Activated B cell treated with CpG ODN at 0.5 μM for 24 hours (primary cell): ENCODE measurements at regions of chr16 and their contacts with region 1.

Region 1: GRCh38 chr16:23803591-23804123 is 32.1 kb upstream of the PRKCB start:
- DNase-seq: peak; percentile 48
- ATAC-seq: peak; percentile 82
- H3K4me3 Mint-ChIP-seq: peak overlapping the region; percentile 51
- H3K27ac Mint-ChIP-seq: peak overlapping the region; percentile 26
- H3K4me1 Mint-ChIP-seq: peaks cover 47% of the 10 kb centered on the region
- H3K27me3 Mint-ChIP-seq: no peaks in the 10 kb centered on the region
- CTCF ChIP-seq: no peak

Region 2: DNA sequence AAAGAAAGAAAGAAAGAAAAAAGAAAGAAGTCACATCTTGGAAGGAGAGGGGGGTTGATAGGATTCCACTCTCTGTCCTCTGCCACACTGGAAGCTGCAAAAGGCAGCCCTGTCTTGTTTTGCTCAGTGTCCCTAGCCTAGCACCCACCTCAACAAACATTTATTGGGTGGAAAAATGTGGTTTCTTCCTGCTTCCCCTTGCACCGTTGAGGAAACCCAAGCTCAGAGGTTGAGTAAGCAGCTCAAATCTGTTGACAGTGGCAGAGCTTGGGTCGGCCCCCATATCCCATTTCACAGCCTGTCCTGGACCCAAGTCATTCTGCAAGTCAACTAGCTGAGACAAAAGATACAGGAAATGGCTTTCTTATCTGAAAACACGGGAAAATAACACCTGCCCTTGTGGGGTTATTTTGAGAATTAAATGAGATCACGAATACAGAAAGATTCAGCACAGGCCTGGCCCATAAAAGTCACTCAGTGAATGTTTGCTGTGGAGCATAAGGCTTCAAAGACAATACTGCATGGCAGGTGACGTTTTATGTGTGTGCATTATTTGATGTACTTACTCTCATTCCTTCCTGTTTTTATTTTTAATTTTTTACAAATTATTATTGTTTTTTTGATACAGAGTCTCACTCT is 437.9 kb before region 1 on chr16:
- CTCF ChIA-PET with region 1: no interaction called
- POLR2A ChIA-PET with region 1: no interaction called
- intact Hi-C with region 1: no loop called
- DNase-seq: no peak
- ATAC-seq: no peak
- H3K4me3 Mint-ChIP-seq: no peak overlapping the region
- H3K27ac Mint-ChIP-seq: no peak overlapping the region
- H3K4me1 Mint-ChIP-seq: peaks cover 4% of the 10 kb centered on the region
- H3K27me3 Mint-ChIP-seq: no peaks in the 10 kb centered on the region
- CTCF ChIP-seq: no peak

Region 3: GRCh38 chr16:23826528-23827045 is 22.9 kb after region 1 on chr16:
- CTCF ChIA-PET with region 1: interaction called, 14 read pairs
- POLR2A ChIA-PET with region 1: interaction called, 6 read pairs
- intact Hi-C with region 1: loop called (anchors 1 kb)
- DNase-seq: no peak
- ATAC-seq: peak; percentile 89
- H3K4me3 Mint-ChIP-seq: peak overlapping the region; percentile 28
- H3K27ac Mint-ChIP-seq: peak overlapping the region; percentile 83
- H3K4me1 Mint-ChIP-seq: peaks cover 30% of the 10 kb centered on the region
- H3K27me3 Mint-ChIP-seq: no peaks in the 10 kb centered on the region
- CTCF ChIP-seq: no peak

Region 4: GRCh38 chr16:23858542-23858941 is 54.9 kb after region 1 on chr16:
- CTCF ChIA-PET with region 1: interaction called, 28 read pairs
- POLR2A ChIA-PET with region 1: interaction called, 6 read pairs
- intact Hi-C with region 1: no loop called
- DNase-seq: no peak
- ATAC-seq: no peak
- H3K4me3 Mint-ChIP-seq: peak overlapping the region; percentile 24
- H3K27ac Mint-ChIP-seq: peak overlapping the region; percentile 89
- H3K4me1 Mint-ChIP-seq: peaks cover 97% of the 10 kb centered on the region
- H3K27me3 Mint-ChIP-seq: no peaks in the 10 kb centered on the region
- CTCF ChIP-seq: no peak

Region 5: DNA sequence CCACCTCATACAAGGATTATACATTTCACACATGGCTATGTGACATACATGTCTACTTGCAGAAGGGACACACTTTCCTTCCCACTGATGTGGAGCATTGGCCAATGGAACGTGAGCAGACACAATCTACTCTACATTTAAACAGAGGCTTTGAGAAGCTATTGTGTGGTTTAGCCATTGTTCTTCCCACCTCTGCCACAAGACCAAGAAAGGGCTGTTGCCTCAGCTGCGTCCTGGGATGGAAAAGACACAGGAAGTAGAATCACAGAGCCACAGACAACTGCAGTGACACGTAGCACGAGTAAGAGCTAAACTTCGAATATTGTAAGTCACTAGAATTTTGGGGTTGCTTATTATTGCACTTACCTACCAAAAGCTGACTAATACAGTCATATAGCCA is 65.4 kb after region 1 on chr16:
- CTCF ChIA-PET with region 1: interaction called, 28 read pairs
- POLR2A ChIA-PET with region 1: interaction called, 6 read pairs
- intact Hi-C with region 1: no loop called
- DNase-seq: no peak
- ATAC-seq: no peak
- H3K4me3 Mint-ChIP-seq: no peak overlapping the region
- H3K27ac Mint-ChIP-seq: peak overlapping the region; percentile 91
- H3K4me1 Mint-ChIP-seq: peaks cover 89% of the 10 kb centered on the region
- H3K27me3 Mint-ChIP-seq: no peaks in the 10 kb centered on the region
- CTCF ChIP-seq: no peak

Region 6: DNA sequence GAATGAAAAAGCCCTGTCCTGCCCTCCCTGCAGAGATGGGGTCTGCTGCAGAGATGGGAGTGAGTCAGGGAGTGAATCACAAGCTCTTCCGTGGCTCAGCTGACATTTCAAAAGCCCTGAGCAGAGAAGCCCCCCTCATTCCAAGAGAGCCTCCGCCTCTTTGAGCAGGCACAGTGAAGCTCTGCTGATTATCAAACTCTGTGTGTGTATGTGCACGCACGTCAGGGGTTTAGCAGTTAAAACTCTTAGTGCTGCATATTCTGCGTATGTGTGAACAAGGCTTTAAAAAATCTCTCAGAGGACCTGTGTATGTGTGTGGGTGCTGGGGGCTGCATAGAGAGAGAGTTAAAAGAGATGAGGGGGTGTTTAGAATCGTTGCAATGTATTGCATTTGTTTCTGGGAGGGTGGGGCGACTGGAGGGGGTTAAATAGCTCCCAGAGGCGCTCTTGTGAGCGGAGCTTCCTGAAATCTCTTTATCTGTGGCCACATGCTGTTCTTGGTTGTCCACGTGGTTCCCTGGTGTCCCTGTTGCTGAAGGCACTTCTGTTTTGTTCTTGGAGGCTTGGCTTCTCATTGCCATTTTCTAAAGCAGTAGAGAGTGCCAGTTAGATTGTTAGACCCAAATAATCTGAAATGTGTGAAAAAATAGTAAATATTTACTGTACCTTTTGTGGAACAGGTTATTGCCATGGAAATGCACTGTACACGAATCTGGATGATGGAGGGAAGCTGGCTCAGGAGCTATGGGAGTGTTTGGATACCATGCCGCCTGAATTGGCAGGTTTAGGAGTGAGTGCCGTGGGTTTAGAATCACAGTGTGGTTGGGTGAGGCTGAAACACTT is 148.7 kb after region 1 on chr16:
- CTCF ChIA-PET with region 1: interaction called, 5 read pairs
- POLR2A ChIA-PET with region 1: interaction called, 3 read pairs
- intact Hi-C with region 1: loop called (anchors 2 kb)
- DNase-seq: no peak
- ATAC-seq: peak; percentile 38
- H3K4me3 Mint-ChIP-seq: peak overlapping the region; percentile 42
- H3K27ac Mint-ChIP-seq: peak overlapping the region; percentile 91
- H3K4me1 Mint-ChIP-seq: peaks cover 96% of the 10 kb centered on the region
- H3K27me3 Mint-ChIP-seq: no peaks in the 10 kb centered on the region
- CTCF ChIP-seq: no peak

Region 7: GRCh38 chr16:24036614-24037013 is 233.0 kb after region 1 on chr16:
- CTCF ChIA-PET with region 1: interaction called, 206 read pairs
- POLR2A ChIA-PET with region 1: interaction called, 15 read pairs
- intact Hi-C with region 1: loop called (anchors 1 kb)
- DNase-seq: no peak
- ATAC-seq: peak; percentile 55
- H3K4me3 Mint-ChIP-seq: peak overlapping the region; percentile 15
- H3K27ac Mint-ChIP-seq: peak overlapping the region; percentile 70
- H3K4me1 Mint-ChIP-seq: peaks cover 48% of the 10 kb centered on the region
- H3K27me3 Mint-ChIP-seq: no peaks in the 10 kb centered on the region
- CTCF ChIP-seq: no peak

Region 8: DNA sequence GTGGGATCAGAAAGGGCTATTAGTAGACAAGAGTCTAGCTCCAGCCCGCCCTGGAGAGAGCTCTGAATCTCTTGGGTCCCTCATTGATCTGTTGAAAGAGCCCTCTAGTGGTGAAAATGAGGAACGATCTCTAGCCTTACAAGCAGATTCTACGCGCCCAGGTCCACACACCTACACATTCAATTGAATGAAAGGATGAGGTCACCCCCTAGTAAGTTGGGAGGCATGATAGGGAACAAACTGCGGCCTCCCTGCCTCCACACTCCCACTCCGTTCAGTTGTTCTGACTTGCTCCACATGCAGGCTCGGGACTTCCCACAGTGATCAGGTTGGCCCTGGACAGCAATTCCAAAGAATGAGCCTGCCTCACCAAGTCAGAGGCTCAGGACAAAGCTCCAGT is 449.5 kb after region 1 on chr16:
- CTCF ChIA-PET with region 1: interaction called, 7 read pairs
- POLR2A ChIA-PET with region 1: no interaction called
- intact Hi-C with region 1: loop called (anchors 1 kb)
- DNase-seq: no peak
- ATAC-seq: peak; percentile 66
- H3K4me3 Mint-ChIP-seq: no peak overlapping the region
- H3K27ac Mint-ChIP-seq: no peak overlapping the region
- H3K4me1 Mint-ChIP-seq: peaks cover 7% of the 10 kb centered on the region
- H3K27me3 Mint-ChIP-seq: peaks cover 54% of the 10 kb centered on the region
- CTCF ChIP-seq: no peak